ENCODE measurements at regions of chr4 and their contacts with region 1.

Region 1: DNA sequence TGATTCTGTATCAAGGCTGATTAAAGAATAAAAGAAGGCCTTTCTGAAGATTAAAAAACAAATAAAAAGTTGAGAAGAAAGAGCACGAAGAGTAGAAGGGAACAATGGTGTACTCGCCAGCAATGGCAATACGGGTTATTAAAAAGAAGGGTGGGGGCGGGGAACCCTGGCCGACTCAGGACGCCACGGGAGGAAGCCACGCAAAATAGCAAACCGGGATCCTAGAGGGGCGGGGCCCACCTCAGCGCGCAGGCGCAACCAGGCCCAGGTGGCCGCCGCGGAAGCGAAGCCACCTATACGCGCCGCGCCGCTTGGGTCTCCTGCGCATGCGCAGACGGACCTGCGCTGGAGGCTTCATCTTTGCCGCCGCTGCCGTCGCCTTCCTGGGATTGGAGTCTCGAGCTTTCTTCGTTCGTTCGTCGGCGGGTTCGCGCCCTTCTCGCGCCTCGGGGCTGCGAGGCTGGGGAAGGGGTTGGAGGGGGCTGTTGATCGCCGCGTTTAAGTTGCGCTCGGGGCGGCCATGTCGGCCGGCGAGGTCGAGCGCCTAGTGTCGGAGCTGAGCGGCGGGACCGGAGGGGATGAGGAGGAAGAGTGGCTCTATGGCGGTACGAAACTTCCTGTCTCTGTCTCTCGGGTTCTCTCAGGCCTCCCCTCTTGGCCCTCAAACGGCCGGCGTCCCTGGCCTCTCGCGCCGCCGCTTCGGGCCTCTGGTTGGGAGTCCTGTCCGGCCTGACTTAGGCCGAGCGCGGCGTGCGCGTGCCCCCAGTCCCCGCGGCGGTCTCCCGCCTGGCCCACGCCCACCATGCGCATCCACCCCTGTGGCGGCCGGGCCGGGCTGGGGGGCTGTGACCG is at the start of gene FIP1L1:
- DNase-seq: peak; percentile 96
- H3K4me3 Mint-ChIP-seq: peak within 1 kb of the TSS; percentile 98
- H3K27ac Mint-ChIP-seq: peak within 1 kb of the TSS; percentile 95
- H3K4me1 Mint-ChIP-seq: peaks cover 26% of the 10 kb centered on the region
- H3K27me3 Mint-ChIP-seq: no peaks in the 10 kb centered on the region
- total RNA-seq, gene FIP1L1: 49.9 to 55.4 TPM

Region 2: DNA sequence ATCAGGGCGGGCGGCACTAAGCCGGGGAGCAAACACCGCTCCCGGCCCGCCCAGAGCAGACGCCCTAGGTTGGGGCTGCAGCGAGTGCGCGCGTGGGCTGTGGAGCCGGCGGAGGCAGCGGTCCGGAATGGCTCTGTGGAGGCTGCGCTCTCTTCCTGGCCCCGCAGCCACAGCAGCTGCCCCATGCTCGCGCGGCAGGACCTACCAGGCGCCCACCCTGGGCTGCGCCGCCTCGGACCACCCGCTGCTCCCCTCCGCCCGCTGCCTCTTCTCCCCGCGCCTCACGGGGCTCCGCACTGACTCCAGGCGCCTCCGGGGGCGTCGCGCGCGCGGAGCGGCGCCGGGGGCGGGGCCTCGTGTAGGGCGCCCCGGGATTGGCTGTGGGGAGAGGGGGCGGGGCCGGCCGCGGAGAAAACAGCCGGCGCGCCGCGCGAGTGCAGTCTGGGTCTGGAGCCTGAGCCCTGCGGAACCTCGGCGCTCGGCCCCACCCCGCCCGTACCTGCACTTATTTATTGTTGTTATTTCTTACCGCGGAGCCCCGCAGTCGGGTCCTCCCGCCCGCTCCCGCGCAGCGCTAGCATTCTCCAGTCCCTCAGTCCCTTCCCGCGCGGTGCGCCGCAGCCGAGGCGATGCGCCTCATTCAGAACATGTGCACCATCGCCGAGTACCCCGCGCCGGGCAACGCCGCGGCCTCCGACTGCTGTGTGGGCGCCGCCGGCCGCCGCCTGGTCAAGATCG is 515.5 kb before region 1 on chr4 and contains the start of gene RASL11B:
- CTCF ChIA-PET with region 1: no interaction called
- intact Hi-C with region 1: loop called (anchors 5 kb)
- DNase-seq: peak; percentile 79
- H3K4me3 Mint-ChIP-seq: peak within 1 kb of the TSS; percentile 69
- H3K27ac Mint-ChIP-seq: no peak within 1 kb of the TSS
- H3K4me1 Mint-ChIP-seq: peaks cover 3% of the 10 kb centered on the region
- H3K27me3 Mint-ChIP-seq: peaks cover 22% of the 10 kb centered on the region
- total RNA-seq, gene RASL11B: 0.24 TPM in 1 of 2 experiments, not detected in the other

Region 3: DNA sequence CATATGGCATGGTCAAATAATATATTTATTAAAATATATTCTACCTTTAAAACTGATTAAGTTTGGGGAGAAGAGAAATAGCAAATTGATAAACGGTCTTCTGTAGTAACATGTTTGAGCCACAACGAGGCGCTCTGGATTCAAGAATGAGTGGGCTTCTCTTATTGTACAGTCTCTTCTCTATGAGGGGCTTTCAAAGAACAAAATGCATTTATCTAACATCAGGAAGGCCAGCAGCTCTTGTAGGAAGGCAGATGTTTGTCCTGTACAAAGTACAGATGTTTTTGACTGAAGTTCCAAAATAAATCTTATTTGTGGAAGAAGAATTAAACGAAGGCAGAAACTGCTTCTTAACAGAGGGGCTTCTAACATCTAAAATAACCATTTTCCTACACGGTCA is 361.9 kb before region 1 on chr4:
- CTCF ChIA-PET with region 1: interaction called, 3 read pairs
- intact Hi-C with region 1: loop called (anchors 5 kb)
- DNase-seq: peak; percentile 49
- H3K4me3 Mint-ChIP-seq: no peak overlapping the region
- H3K27ac Mint-ChIP-seq: no peak overlapping the region
- H3K4me1 Mint-ChIP-seq: peaks cover 36% of the 10 kb centered on the region
- H3K27me3 Mint-ChIP-seq: no peaks in the 10 kb centered on the region

Region 4: GRCh38 chr4:53365486-53366300 is 11.9 kb before region 1 on chr4 and contains the start of gene SCFD2:
- CTCF ChIA-PET with region 1: interaction called, 3 read pairs
- intact Hi-C with region 1: loop called (anchors 1 kb)
- DNase-seq: peak; percentile 99
- H3K4me3 Mint-ChIP-seq: peak within 1 kb of the TSS; percentile 96
- H3K27ac Mint-ChIP-seq: peak within 1 kb of the TSS; percentile 96
- H3K4me1 Mint-ChIP-seq: peaks cover 38% of the 10 kb centered on the region
- H3K27me3 Mint-ChIP-seq: peaks cover 3% of the 10 kb centered on the region
- total RNA-seq, gene SCFD2: 14.3 to 15.1 TPM

Region 5: GRCh38 chr4:53432528-53433424 is 55.2 kb after region 1 on chr4:
- CTCF ChIA-PET with region 1: no interaction called
- intact Hi-C with region 1: loop called (anchors 5 kb)
- DNase-seq: no peak
- H3K4me3 Mint-ChIP-seq: no peak overlapping the region
- H3K27ac Mint-ChIP-seq: no peak overlapping the region
- H3K4me1 Mint-ChIP-seq: peaks cover 26% of the 10 kb centered on the region
- H3K27me3 Mint-ChIP-seq: no peaks in the 10 kb centered on the region

Region 6: DNA sequence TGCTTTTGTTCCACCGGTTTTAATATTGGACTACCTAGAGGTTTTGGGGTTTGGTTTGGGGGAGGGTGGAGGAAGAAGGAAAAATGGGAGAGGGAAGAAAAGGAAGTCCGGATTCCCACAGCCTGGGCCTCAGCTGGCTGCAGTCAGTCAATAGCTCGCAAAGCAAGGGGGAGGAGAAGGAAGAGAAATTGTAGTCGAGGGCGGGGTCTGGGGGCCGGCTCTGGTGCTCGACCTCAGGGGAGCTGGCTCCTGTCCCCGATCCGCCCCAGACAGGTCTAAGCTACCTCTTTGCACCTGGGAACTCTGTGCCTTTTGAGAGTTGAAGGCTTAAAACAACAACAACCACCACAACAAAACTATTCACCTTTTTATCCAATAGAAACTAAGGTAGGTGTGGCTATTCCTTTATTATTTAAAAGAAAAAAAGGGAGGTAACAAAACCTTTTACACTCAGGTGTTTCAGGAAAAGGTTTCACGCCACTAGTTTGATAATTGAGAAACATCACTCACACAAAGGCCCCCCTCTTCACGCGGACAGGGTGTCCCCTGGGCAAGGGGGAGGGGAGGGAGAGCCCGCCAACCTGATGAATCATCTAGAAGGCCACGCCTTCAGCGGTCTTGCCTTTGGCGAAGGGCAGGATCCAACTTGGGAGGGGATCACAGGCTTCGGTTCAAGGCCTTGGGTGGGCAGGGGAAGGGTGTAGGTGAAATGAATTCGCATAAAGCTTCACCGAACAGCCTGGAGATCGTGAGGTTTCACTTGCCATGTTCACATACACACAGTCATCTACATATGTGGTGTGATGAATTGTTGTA is 215.3 kb after region 1 on chr4:
- CTCF ChIA-PET with region 1: no interaction called
- intact Hi-C with region 1: no loop called
- DNase-seq: no peak
- H3K4me3 Mint-ChIP-seq: no peak overlapping the region
- H3K27ac Mint-ChIP-seq: no peak overlapping the region
- H3K4me1 Mint-ChIP-seq: peaks cover 12% of the 10 kb centered on the region
- H3K27me3 Mint-ChIP-seq: peaks cover 50% of the 10 kb centered on the region

Region 7: DNA sequence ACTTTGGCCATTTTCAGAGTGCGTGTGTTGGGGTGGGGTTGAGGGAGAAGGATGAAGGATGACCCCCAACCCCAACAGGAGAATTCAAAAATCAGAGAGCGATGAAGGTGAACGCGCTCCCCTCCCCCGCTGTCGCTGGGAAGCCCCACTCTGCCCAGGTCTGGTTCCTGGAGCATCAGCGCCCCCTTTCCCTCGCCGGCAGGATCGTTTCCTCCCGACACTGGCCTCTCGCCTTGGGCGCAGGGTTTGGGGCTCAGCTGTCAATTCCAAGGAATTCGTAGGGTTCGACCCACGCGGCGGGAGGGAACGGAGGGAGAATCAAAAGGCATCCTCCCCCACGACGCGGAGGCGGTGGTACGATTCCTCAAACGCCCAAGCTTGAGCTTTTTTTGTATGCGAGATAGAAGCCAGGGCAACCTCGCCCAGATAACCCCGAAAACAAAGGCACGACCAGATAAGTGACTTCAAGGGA is 850.5 kb after region 1 on chr4:
- CTCF ChIA-PET with region 1: interaction called, 7 read pairs
- intact Hi-C with region 1: loop called (anchors 5 kb)
- DNase-seq: peak; percentile 79
- H3K4me3 Mint-ChIP-seq: peak overlapping the region; percentile 59
- H3K27ac Mint-ChIP-seq: no peak overlapping the region
- H3K4me1 Mint-ChIP-seq: peaks cover 49% of the 10 kb centered on the region
- H3K27me3 Mint-ChIP-seq: peaks cover 89% of the 10 kb centered on the region

Measured in activated naive CD4-positive, alpha-beta T cell treated with anti-CD3 and anti-CD28 coated beads for 36 hours (primary cell).